PC-9 (cell line): ENCODE measurements at regions of chr17 and their contacts with region 1.

Region 1: DNA sequence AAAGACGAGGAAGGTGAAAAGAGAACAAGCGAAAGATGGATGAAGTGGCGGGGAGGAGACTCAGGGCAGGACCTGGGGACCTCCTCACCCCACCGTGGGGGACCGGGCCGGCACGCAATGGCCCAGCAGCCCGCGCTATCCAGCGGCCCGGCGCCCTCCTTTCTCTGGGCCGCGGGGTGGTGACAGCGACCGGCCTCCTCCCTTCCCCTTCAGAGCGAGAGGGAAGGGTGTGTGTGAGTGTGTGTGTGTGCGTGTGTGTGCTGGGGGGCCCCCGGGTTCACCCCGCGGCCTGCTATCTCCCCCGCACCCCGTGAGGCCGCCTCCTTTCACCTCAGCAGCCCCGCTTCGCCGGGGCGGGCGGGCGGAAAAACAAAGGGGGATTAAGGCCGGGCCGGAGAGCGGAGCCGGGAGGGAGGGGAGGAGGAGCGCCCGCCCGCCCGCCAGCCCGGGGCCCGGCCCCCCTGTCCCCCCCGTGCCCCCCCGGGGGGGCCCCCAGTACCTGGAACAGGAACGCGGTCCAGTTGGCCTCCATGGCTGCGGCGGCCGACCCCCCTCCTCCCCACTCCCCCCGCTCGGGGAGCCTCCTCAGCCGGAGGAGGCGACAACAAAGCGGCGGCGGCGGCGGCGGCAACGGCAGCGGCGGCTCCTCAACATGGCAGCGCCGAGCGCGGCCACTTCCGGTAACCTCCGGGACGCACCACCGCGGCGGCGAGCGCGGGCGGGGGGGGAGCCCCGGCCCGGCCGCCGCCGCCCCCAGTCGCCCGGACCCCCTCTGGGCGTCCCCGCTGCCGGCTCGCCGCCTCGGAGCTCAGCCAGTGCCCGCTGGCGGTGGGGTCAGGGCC is at the start of gene VEZF1:
- DNase-seq: peak in 1 of 2 experiments; percentile 70
- H3K4me3 ChIP-seq: peak within 1 kb of the TSS; percentile 62
- H3K27ac ChIP-seq: peak within 1 kb of the TSS; percentile 39
- H3K4me1 ChIP-seq: peaks cover 29% of the 10 kb centered on the region
- H3K27me3 ChIP-seq: no peaks in the 10 kb centered on the region
- CTCF ChIP-seq: no peak
- total RNA-seq, gene VEZF1: 29.9 and 50.9 TPM in 2 replicates

Region 2: DNA sequence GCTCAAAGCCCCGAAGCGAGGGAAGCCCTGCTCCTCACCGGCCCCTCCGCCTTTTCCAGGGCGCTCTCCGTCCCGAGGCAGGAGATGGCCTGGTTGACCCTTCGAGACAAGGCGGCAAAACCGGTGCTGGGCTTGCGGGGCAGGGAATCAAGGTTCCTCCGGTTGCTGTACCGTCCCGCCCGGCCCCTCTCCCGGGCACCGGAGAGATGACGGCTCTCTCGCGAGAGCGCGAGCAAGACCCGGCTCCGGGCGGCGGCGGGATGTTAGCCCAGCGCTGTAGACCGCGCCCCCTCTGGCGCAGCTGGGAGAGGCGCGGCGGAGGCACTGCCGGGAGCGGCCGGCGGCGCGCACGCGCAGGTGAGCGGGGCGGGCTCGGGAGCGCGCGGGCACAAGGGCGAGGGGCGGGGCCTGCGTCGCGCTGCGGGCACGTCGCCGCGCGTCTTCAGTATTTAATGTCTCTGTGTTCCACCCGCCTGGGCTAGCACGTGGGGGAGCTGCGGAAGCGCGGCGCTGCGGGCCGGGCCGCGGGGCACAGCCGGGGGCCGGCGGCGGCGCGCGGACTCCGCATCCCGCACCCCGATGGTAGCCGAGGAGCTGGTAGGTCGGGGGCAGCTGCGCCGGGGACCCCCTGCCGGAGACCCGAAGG is 902.9 kb before region 1 on chr17 and contains the start of gene AKAP1:
- CTCF ChIA-PET with region 1: interaction called, 10 read pairs
- POLR2A ChIA-PET with region 1: no interaction called
- intact Hi-C with region 1: no loop called
- DNase-seq: peak; percentile 86 to 97
- H3K4me3 ChIP-seq: peak within 1 kb of the TSS; percentile 91
- H3K27ac ChIP-seq: peak within 1 kb of the TSS; percentile 64
- H3K4me1 ChIP-seq: peaks cover 28% of the 10 kb centered on the region
- H3K27me3 ChIP-seq: no peaks in the 10 kb centered on the region
- CTCF ChIP-seq: peak; percentile 40; the same call in 1 of the 2 replicates
- total RNA-seq, gene AKAP1: 29.8 and 34.9 TPM in 2 replicates

Region 3: DNA sequence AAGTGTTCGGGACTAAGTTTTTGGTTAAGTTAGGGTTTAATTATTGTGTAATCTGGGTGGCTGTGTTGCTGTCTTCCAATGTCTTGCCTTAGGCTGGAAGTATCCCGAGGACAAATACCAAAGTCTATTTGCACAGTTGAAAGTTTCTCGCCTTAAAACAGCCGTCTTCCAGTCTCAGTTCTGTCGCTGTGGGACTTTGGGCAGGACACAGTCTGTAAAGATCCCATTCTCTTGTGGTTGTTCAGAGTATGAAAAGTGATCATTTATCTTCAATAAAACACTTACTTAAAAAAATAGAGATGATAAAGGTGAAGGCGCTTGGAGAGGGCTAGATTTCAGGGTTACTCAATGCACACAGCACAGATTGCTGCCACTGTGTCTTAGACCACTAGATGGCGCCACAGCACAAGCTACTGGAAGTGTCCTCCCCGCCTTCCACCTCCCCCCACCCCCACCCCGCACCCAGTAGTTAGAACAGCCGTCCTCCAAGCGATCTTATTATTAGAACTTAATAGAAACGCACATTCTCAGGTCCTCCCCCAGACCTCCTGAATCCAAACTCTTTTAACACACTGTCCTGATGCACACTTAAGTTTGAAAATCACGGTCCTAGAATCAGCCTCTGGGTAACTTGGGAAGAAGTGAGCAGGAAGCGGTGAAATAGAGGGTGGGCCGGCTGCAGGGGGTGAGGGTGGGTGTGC is 856.9 kb before region 1 on chr17:
- CTCF ChIA-PET with region 1: interaction called, 13 read pairs
- POLR2A ChIA-PET with region 1: no interaction called
- intact Hi-C with region 1: no loop called
- DNase-seq: peak; percentile 66 to 67
- H3K4me3 ChIP-seq: no peak overlapping the region; the same call in 1 of the 2 replicates
- H3K27ac ChIP-seq: no peak overlapping the region
- H3K4me1 ChIP-seq: peaks cover 7% of the 10 kb centered on the region
- H3K27me3 ChIP-seq: no peaks in the 10 kb centered on the region
- CTCF ChIP-seq: peak; percentile 96

Region 4: GRCh38 chr17:57523926-57524632 is 463.7 kb before region 1 on chr17:
- CTCF ChIA-PET with region 1: no interaction called
- POLR2A ChIA-PET with region 1: no interaction called
- intact Hi-C with region 1: no loop called
- DNase-seq: peak in 1 of 2 experiments; percentile 20
- H3K4me3 ChIP-seq: no peak overlapping the region
- H3K27ac ChIP-seq: no peak overlapping the region
- H3K4me1 ChIP-seq: no peaks in the 10 kb centered on the region
- H3K27me3 ChIP-seq: peaks cover 11% of the 10 kb centered on the region
- CTCF ChIP-seq: no peak

Region 5: DNA sequence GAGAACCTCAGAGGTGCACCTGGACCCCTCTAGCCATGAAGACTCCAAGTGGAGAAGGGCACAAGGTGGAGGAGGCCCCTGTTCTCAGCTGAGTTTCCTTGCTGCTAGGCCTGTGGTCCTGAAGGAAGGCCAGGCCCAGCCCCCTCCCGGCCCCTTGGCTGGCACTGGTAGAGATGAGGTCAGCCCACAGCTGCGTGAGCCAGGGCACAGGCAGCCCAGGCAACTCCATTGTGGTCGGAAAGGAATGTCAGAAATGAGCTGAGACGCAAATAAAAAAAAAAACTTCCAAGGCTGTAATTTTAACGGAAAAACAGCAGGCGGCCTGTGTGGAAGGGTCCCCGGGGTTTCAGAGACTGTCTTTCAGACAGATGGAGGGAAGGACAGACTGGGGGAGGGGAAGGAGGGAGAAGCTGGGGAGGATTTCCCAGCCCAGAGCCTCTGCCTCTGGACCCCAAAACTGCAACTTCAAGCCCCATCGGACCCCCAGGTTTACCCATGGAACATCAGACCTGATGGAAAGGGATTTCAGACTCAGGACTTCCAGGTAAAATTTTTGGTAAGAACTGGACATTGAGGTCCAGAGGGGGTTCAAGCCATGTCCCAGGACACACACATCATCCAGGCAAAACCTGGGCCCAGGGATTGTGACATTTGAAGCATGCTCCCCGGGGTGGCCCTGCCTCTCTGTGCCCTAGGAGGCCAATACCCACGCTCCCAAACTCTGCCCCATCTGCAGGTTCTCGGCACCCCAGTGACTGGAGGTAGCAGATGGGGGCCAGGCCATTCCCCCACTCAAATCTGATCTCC is 112.3 kb before region 1 on chr17:
- CTCF ChIA-PET with region 1: interaction called, 10 read pairs
- POLR2A ChIA-PET with region 1: interaction called, 17 read pairs
- intact Hi-C with region 1: loop called (anchors 1 kb)
- DNase-seq: peak; percentile 88 to 92
- H3K4me3 ChIP-seq: no peak overlapping the region
- H3K27ac ChIP-seq: no peak overlapping the region
- H3K4me1 ChIP-seq: peaks cover 55% of the 10 kb centered on the region
- H3K27me3 ChIP-seq: no peaks in the 10 kb centered on the region
- CTCF ChIP-seq: peak; percentile 77

Region 6: GRCh38 chr17:57892829-57893595 is 94.8 kb before region 1 on chr17:
- CTCF ChIA-PET with region 1: no interaction called
- POLR2A ChIA-PET with region 1: no interaction called
- intact Hi-C with region 1: loop called (anchors 1 kb)
- DNase-seq: peak; percentile 92 to 99
- H3K4me3 ChIP-seq: peak overlapping the region; percentile 41; the same call in 1 of the 2 replicates
- H3K27ac ChIP-seq: peak overlapping the region; percentile 90
- H3K4me1 ChIP-seq: peaks cover 38% of the 10 kb centered on the region
- H3K27me3 ChIP-seq: no peaks in the 10 kb centered on the region
- CTCF ChIP-seq: peak; percentile 58; the same call in 1 of the 2 replicates

Region 7: GRCh38 chr17:58001461-58002124 is 13.8 kb after region 1 on chr17:
- CTCF ChIA-PET with region 1: no interaction called
- POLR2A ChIA-PET with region 1: no interaction called
- intact Hi-C with region 1: no loop called
- DNase-seq: no peak
- H3K4me3 ChIP-seq: no peak overlapping the region
- H3K27ac ChIP-seq: peak overlapping the region; percentile 3; the same call in 1 of the 2 replicates
- H3K4me1 ChIP-seq: peaks cover 31% of the 10 kb centered on the region
- H3K27me3 ChIP-seq: no peaks in the 10 kb centered on the region
- CTCF ChIP-seq: no peak